ENCODE measurements at regions of chr10 and their contacts with region 1.

Region 1: DNA sequence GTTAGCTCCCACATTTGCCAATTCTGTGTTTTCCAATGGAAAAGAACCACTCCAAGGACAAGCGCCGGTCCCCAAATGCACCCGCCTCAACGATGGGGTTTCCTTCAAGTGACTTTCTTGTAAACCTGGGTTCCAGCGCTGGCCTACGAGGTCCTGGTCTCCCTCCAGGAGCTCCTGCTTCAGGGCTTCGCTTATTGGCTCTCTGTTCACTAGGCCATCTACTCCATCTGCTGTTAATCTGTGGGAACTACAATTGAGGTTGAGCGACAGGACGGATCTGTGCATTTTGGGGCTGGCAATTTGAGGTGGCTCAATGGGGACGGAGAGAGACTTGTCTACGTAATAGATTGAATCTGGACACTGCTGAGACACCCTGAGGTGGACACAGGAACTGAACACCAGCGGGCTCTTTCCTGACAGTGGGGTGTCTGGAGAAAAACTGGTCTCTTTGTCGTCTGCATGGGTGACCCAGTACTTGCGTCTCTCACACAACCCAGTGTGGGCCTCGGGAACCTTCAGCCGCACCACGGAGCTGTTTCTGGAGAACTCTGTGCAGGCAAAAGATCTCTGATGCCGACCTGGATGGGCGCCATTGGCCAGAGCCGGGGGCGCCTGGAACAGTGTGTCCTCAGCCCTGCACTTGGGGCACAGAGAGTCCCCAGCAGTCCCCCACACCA is 115.9 kb upstream of the ADAM12 start:
- DNase-seq: peak; percentile 48
- ATAC-seq: peak; percentile 99
- H3K4me3 Mint-ChIP-seq: no peak overlapping the region
- H3K27ac Mint-ChIP-seq: no peak overlapping the region
- H3K4me1 Mint-ChIP-seq: no peaks in the 10 kb centered on the region
- H3K27me3 Mint-ChIP-seq: no peaks in the 10 kb centered on the region
- CTCF ChIP-seq: peak; percentile 45; the same call in 1 of the 2 replicates

Region 2: GRCh38 chr10:125982260-125982948 is 521.8 kb before region 1 on chr10:
- CTCF ChIA-PET with region 1: interaction called, 12 read pairs
- POLR2A ChIA-PET with region 1: no interaction called
- DNase-seq: peak; percentile 33
- ATAC-seq: peak; percentile 76
- H3K4me3 Mint-ChIP-seq: no peak overlapping the region
- H3K27ac Mint-ChIP-seq: no peak overlapping the region
- H3K4me1 Mint-ChIP-seq: peaks cover 20% of the 10 kb centered on the region
- H3K27me3 Mint-ChIP-seq: no peaks in the 10 kb centered on the region
- CTCF ChIP-seq: peak; percentile 48

Region 3: GRCh38 chr10:126387023-126387921 is 116.9 kb before region 1 on chr10:
- CTCF ChIA-PET with region 1: interaction called, 20 read pairs
- POLR2A ChIA-PET with region 1: no interaction called
- DNase-seq: peak; percentile 80
- ATAC-seq: peak; percentile 57
- H3K4me3 Mint-ChIP-seq: peak overlapping the region; percentile 86
- H3K27ac Mint-ChIP-seq: no peak overlapping the region
- H3K4me1 Mint-ChIP-seq: peaks cover 26% of the 10 kb centered on the region
- H3K27me3 Mint-ChIP-seq: peaks cover 53% of the 10 kb centered on the region
- CTCF ChIP-seq: peak; percentile 67

Region 4: GRCh38 chr10:126634915-126635314 is 130.7 kb after region 1 on chr10:
- CTCF ChIA-PET with region 1: no interaction called
- POLR2A ChIA-PET with region 1: no interaction called
- DNase-seq: no peak
- ATAC-seq: no peak
- H3K4me3 Mint-ChIP-seq: no peak overlapping the region
- H3K27ac Mint-ChIP-seq: no peak overlapping the region
- H3K4me1 Mint-ChIP-seq: no peaks in the 10 kb centered on the region
- H3K27me3 Mint-ChIP-seq: no peaks in the 10 kb centered on the region; the same call in 1 of the 2 replicates
- CTCF ChIP-seq: no peak